ENCODE measurements at regions of chr3 and their contacts with region 1.

Region 1: DNA sequence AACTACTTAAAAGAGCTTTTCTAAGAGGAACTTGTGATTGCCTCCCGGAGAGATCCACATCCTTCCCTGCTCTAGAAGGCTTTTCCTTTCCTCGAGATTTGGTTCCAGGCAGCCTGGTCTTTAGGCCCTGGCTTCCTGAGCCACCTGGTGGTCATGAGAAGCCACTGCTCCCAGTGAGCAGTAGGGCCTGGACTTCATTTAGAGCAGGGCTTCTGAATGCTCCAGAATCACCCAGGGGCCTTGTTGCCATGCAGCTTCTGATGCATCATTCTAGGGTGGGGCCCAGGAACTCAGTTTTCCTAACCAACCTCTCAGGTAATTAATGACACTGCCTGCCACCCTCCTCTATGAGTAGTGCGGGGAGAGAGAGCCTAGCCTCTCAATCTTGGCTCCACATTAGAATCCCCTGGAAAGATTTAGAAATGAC is 29.6 kb downstream of the PSMD6 start:
- DNase-seq: peak; percentile 50 to 72 (median 63)
- ATAC-seq: peak; percentile 95 to 97 (median 96)
- H3K4me3 ChIP-seq: no peak overlapping the region
- H3K27ac ChIP-seq: no peak overlapping the region
- H3K4me1 ChIP-seq: peaks cover 0 to 10% (median 0%) of the 10 kb centered on the region in 4 donors
- H3K27me3 ChIP-seq: no peaks in the 10 kb centered on the region
- CTCF ChIP-seq: peak; percentile 89 to 94 (median 92)
- POLR2A ChIP-seq: no peak

Region 2: GRCh38 chr3:63863148-63864007 is 130.3 kb before region 1 on chr3 and contains the starts of genes ATXN7 and THOC7:
- intact Hi-C with region 1: loop called in 1 of 2 experiments (anchors 10 kb)
- DNase-seq: peak; percentile 76 to 81 (median 81)
- ATAC-seq: peak; percentile 69 to 87 (median 84)
- H3K4me3 ChIP-seq: peak within 1 kb of the TSS; percentile 90 to 95 (median 93)
- H3K27ac ChIP-seq: peak within 1 kb of the TSS; percentile 87 to 96 (median 93)
- H3K4me1 ChIP-seq: peaks cover 0 to 13% (median 3%) of the 10 kb centered on the region in 4 donors
- H3K27me3 ChIP-seq: no peaks in the 10 kb centered on the region
- CTCF ChIP-seq: no peak
- POLR2A ChIP-seq: peak; percentile 57
- total RNA-seq, gene ATXN7: 14.6 to 18.6 (median 15.0) TPM
- total RNA-seq, gene THOC7: 21.8 to 38.8 (median 28.7) TPM

Region 3: GRCh38 chr3:63911873-63912767 is 81.5 kb before region 1 on chr3 and contains the start of gene SCAANT1:
- intact Hi-C with region 1: loop called in 1 of 2 experiments (anchors 10 kb)
- DNase-seq: peak; percentile 94 to 97 (median 97)
- ATAC-seq: peak; percentile 80 to 91 (median 90)
- H3K4me3 ChIP-seq: peak within 1 kb of the TSS; percentile 79 to 88 (median 81)
- H3K27ac ChIP-seq: peak within 1 kb of the TSS; percentile 92 to 95 (median 94)
- H3K4me1 ChIP-seq: peaks cover 0 to 30% (median 8%) of the 10 kb centered on the region in 4 donors
- H3K27me3 ChIP-seq: no peaks in the 10 kb centered on the region
- CTCF ChIP-seq: peak in 1 of 4 donors; percentile 30
- POLR2A ChIP-seq: peak; percentile 90
- total RNA-seq, gene SCAANT1: not detected

Region 4: GRCh38 chr3:64062876-64063785 is 69.5 kb after region 1 on chr3:
- intact Hi-C with region 1: no loop called
- DNase-seq: no peak
- ATAC-seq: no peak
- H3K4me3 ChIP-seq: no peak overlapping the region
- H3K27ac ChIP-seq: no peak overlapping the region
- H3K4me1 ChIP-seq: no peaks in the 10 kb centered on the region
- H3K27me3 ChIP-seq: no peaks in the 10 kb centered on the region
- CTCF ChIP-seq: no peak
- POLR2A ChIP-seq: no peak

Region 5: GRCh38 chr3:64150623-64151207 is 157.0 kb after region 1 on chr3:
- intact Hi-C with region 1: no loop called
- DNase-seq: no peak
- ATAC-seq: peak in 3 of 4 donors; percentile 39 to 55 (median 44)
- H3K4me3 ChIP-seq: no peak overlapping the region
- H3K27ac ChIP-seq: no peak overlapping the region
- H3K4me1 ChIP-seq: no peaks in the 10 kb centered on the region
- H3K27me3 ChIP-seq: no peaks in the 10 kb centered on the region
- CTCF ChIP-seq: no peak
- POLR2A ChIP-seq: no peak